Aorta (tissue), 5 donors: ENCODE measurements at regions of chr19 and their contacts with region 1.

Region 1: GRCh38 chr19:34171877-34172660 is at the start of gene LSM14A:
- DNase-seq: peak; percentile 96 to 97
- ATAC-seq: peak; percentile 97
- H3K4me3 ChIP-seq: peak within 1 kb of the TSS; percentile 90
- H3K27ac ChIP-seq: peak within 1 kb of the TSS; percentile 94 to 96
- H3K4me1 ChIP-seq: no peaks in the 10 kb centered on the region
- H3K27me3 ChIP-seq: no peaks in the 10 kb centered on the region
- total RNA-seq, gene LSM14A: 86.5 to 108 TPM

Region 2: DNA sequence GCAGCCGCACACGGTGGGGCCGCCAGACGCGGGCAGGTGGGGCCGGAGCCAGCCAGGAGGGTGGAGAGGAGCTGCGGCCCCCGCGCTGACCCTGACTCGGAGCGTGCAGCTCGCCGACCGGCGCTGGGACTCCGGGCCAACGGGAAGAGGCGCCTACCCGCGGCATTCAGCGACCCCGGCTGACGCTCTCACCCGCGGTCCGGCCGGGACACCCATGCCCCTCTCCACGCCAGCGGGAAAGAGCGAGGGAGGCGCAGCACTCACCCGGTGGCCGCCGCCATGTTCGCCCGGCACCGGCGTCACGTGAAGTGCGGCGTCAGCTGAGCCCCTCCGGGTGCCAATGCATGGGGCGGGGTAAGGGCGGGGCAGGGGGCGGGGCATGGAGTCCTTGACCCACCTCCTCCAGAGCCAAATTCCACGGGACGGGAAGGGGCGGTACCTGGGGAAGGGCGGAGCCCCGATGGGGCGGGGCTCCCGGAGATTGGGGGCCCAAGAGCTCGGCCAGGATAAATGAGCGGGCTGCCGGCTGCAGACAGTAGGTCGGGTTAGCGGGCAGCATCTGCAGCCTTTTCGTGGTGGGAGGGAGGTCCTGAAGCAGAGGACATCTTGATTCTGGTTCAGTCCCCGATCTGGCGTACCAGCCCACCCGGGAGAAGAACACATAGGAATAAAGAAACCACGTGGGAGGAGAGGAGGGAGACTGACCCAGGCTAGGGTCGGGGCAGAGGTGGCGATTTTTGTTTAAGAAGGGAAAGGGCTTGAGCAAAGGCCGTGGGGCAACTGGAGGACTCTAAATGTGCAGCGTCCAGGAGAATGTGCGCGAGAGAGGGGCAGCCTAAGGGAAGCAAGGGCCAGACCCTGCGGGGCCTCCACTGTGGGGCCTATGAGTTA is 650.3 kb before region 1 on chr19 and contains the start of gene PEPD:
- intact Hi-C with region 1: loop called in 1 of 2 experiments (anchors 5 kb)
- DNase-seq: peak; percentile 92 to 97
- ATAC-seq: peak; percentile 96
- H3K4me3 ChIP-seq: peak within 1 kb of the TSS; percentile 67 to 90
- H3K27ac ChIP-seq: no peak within 1 kb of the TSS
- H3K4me1 ChIP-seq: no peaks in the 10 kb centered on the region
- H3K27me3 ChIP-seq: no peaks in the 10 kb centered on the region
- total RNA-seq, gene PEPD: 54.3 to 56.6 TPM

Region 3: DNA sequence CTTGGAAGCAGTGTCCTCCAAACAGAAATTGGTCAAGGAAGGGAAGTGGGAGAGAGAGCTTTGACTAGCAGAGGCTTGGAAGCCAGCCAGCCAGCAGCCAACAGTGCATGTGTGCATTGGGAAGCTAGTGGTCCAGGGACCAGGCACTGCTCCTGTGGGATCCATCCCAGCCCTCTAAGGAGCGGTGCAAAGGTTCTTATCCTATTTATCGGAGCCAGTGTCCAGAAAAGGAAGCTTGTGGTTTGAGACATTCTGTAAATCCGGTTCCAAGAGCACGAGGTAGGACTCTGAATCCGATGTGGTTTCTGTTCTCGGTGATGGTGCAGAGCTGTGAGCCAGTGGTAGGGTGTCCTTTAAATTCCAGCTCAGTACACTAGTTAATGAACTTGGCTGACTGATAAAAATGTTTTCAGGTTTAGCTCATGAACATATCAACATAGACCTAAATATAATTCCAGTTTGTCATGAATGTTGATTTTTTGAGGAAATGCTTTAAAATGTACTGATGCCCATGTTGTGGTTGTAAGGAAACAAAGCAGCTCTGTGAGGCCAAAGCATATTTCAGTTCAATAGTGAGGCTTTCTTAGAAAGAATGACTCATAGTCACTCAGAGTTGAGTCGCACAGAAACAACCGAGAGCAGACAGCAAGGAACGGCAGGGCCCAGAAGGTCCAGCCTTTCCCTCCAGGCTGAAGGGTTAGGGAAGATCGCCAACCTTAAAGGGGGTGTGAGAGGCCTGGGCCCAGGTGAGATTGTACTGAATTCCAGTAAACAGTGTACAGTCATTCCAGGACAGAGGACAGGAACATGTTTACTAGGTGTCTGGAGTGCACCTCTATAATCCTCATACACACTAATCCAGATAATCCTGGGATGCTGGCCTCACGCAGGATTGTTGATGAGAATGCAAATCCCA is 60.8 kb after region 1 on chr19:
- intact Hi-C with region 1: no loop called
- DNase-seq: peak; percentile 82 to 86
- ATAC-seq: peak; percentile 89
- H3K4me3 ChIP-seq: no peak overlapping the region
- H3K27ac ChIP-seq: peak overlapping the region; percentile 14 to 85
- H3K4me1 ChIP-seq: peaks cover 0 to 9% of the 10 kb centered on the region in 2 donors
- H3K27me3 ChIP-seq: no peaks in the 10 kb centered on the region

Region 4: GRCh38 chr19:34336781-34337271 is 164.8 kb after region 1 on chr19:
- intact Hi-C with region 1: no loop called
- DNase-seq: no peak
- ATAC-seq: no peak
- H3K4me3 ChIP-seq: no peak overlapping the region
- H3K27ac ChIP-seq: no peak overlapping the region
- H3K4me1 ChIP-seq: no peaks in the 10 kb centered on the region
- H3K27me3 ChIP-seq: no peaks in the 10 kb centered on the region